ENCODE measurements at regions of chr5 and their contacts with region 1.

Region 1: DNA sequence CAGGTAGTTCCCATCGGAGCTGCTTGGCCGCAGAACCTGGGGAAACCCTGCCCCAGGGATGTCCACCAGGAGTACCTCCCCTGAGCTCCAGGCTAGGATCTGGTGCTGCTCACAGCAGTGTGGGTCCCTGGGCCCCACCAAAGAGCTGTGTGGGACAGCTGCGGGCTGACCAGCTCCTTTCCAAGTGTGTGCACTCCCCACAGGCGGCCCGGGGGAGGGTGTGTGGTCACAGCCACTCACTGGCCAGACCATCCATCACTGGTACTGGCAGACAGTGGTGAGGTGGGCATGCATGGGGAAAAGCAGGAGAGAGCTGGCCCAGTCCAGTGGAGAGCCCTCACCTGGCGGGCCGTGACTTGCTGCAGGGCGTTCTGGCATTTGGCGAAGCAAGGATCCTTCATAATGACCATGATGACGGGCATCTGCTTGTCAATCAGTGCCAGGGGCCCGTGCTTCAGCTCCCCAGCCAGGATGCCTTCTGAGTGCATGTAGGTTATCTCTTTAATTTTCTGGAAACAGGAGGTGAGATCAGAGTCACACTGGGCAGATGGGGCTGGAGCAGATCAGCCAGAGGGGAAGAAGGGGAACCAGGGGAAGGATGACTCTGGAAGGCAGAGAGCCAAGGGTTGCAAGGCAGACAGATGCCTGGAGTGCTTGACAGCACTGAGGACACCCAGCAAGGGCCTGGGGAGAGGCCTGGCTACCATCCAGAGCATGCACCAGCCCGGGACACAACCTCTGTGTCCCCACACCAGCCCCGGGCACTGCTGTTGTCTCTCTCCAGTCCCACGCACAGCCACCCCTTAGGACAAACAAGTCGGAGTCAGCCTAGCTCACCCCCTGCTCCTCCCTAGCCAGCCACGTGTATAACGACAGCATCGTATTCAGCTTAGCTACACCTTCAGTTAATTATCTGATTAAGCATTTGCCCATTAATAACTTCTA is 12.8 kb upstream of the MAPK9 start:
- DNase-seq: no peak
- H3K4me3 ChIP-seq: no peak overlapping the region
- H3K27ac ChIP-seq: no peak overlapping the region
- H3K27me3 ChIP-seq: no peaks in the 10 kb centered on the region
- CTCF ChIP-seq: no peak

Region 2: DNA sequence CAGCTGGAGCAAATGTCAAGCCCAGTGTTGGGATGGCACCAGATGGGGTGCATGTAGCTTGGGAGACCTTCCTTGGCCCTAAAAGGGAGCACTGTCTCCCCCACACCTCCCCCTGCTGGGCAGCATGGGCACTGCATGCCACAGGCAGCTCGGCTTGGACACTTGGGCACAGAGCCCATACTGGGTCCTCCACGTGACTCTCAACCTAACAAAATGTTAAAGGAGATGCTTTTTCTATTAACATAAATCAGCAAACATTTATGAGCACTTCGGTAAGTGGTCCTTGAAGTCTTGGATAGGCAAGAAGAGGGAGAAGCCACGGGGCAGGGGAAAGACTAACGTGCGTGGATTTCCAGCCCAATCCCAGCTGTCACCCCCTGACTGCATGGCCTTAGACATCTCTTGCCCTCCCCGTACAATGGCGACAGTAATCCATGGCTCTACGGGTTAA is 11.1 kb after region 1 on chr5:
- CTCF ChIA-PET with region 1: interaction called, 20 read pairs
- POLR2A ChIA-PET with region 1: no interaction called
- DNase-seq: no peak
- H3K4me3 ChIP-seq: no peak overlapping the region
- H3K27ac ChIP-seq: no peak overlapping the region
- H3K27me3 ChIP-seq: no peaks in the 10 kb centered on the region
- CTCF ChIP-seq: peak; percentile 96

Region 3: DNA sequence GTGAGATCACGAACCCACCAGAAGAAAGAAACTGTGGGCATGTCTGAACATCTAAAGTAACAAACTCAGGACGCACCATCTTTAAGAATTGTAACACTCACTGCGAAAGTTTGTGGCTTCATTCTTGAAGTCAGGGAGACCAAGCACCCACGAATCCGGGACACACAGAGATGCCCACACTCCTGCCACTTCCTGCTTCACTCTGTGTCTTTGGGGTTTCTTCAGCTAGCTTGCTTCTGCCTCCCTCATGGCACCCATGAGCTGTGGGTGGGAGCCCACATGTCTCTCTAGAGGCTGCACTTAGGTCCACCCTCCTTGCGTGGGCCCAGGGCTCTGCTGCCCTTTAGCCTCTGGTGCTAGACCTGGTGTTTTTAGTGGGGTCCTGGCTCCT is 128.3 kb after region 1 on chr5:
- CTCF ChIA-PET with region 1: no interaction called
- POLR2A ChIA-PET with region 1: no interaction called
- DNase-seq: no peak
- H3K4me3 ChIP-seq: no peak overlapping the region
- H3K27ac ChIP-seq: no peak overlapping the region
- H3K27me3 ChIP-seq: no peaks in the 10 kb centered on the region
- CTCF ChIP-seq: no peak